ENCODE measurements at regions of chr5 and their contacts with region 1.

Region 1: DNA sequence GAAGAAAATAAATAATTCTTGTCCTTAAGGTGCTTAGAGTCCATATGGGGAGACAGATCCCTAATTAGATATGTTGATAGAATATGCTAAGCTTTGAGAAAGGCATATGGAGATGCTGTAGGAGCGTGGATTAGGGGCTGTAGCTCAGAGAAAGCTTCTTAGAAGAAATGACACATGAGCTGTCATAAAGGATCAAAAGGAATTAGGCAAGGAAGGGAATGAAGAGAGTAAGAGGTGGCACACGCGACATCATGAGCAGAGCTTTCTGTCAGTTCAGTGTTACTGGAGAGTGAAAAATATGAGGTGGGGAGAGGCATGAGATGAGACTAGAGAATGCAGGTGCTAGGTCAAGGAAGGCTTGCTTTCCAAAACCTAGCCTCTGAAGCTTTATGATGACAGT is 118.6 kb downstream of the KIAA0825 start:
- DNase-seq: no peak
- ATAC-seq: no peak
- H3K4me3 ChIP-seq: no peak overlapping the region
- H3K27ac ChIP-seq: no peak overlapping the region
- H3K4me1 ChIP-seq: no peaks in the 10 kb centered on the region
- H3K27me3 ChIP-seq: no peaks in the 10 kb centered on the region
- CTCF ChIP-seq: no peak
- POLR2A ChIP-seq: no peak
- RAD21 ChIP-seq: no peak

Region 2: GRCh38 chr5:94345257-94345656 is 154.5 kb before region 1 on chr5:
- CTCF ChIA-PET with region 1: no interaction called
- POLR2A ChIA-PET with region 1: no interaction called
- dilution Hi-C with region 1: no loop called
- in situ Hi-C with region 1: no loop called
- intact Hi-C with region 1: no loop called
- DNase-seq: no peak
- ATAC-seq: no peak
- H3K4me3 ChIP-seq: no peak overlapping the region
- H3K27ac ChIP-seq: no peak overlapping the region
- H3K4me1 ChIP-seq: no peaks in the 10 kb centered on the region
- H3K27me3 ChIP-seq: no peaks in the 10 kb centered on the region
- CTCF ChIP-seq: no peak
- POLR2A ChIP-seq: no peak
- RAD21 ChIP-seq: no peak

Region 3: GRCh38 chr5:94481059-94481458 is 18.7 kb before region 1 on chr5:
- CTCF ChIA-PET with region 1: no interaction called
- POLR2A ChIA-PET with region 1: no interaction called
- dilution Hi-C with region 1: no loop called
- in situ Hi-C with region 1: no loop called
- intact Hi-C with region 1: loop called (anchors 1 kb)
- DNase-seq: no peak
- ATAC-seq: no peak
- H3K4me3 ChIP-seq: no peak overlapping the region
- H3K27ac ChIP-seq: no peak overlapping the region
- H3K4me1 ChIP-seq: no peaks in the 10 kb centered on the region
- H3K27me3 ChIP-seq: no peaks in the 10 kb centered on the region
- CTCF ChIP-seq: no peak
- POLR2A ChIP-seq: no peak
- RAD21 ChIP-seq: no peak

Measured in IMR-90 (cell line).